ENCODE measurements at regions of chr4 and their contacts with region 1.

Region 1: GRCh38 chr4:168408620-168409019 is 71.7 kb downstream of the DDX60L start:
- DNase-seq: no peak

Region 2: DNA sequence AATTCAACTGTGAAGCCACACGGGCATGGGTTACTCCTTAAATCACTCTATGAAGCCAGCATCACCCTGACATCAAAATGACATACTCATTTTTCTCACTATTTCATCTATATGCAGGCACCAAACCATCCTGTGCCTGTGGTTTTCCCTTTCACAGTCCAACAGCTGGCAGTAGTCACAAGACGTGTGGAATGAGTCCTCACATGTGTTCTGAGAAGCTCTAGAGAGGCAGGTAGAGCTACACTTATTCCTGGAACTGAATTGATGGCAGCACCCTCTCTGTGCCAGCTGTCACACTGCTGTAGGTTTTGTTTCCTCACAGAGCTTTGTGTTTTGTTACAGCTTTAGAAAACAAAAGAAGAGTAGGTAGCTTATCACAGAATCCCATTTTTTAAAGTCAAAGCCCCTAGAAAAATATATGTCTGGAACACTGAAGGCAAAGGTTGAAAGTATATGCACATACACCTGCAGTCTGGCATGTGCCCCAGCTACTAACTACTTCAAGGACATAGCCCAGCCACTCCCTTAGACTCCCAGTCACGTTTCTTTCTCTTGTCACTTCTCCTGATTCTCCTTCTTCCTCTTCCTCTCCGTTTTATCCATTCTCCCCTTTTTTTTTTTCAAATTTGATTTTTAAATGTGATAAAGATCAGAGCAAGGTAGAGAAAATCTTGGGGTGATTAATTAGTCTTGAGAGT is 209.2 kb before region 1 on chr4:
- intact Hi-C with region 1: loop called (anchors 10 kb)
- DNase-seq: no peak

Region 3: GRCh38 chr4:168257768-168258167 is 150.9 kb before region 1 on chr4:
- intact Hi-C with region 1: loop called (anchors 5 kb)
- DNase-seq: no peak

Region 4: GRCh38 chr4:168318266-168318895 is 90.2 kb before region 1 on chr4 and contains the start of gene DDX60:
- intact Hi-C with region 1: loop called (anchors 5 kb)
- DNase-seq: peak; percentile 92
- total RNA-seq, gene DDX60: 10.8 TPM

Region 5: GRCh38 chr4:168388890-168389289 is 19.7 kb before region 1 on chr4:
- intact Hi-C with region 1: no loop called
- DNase-seq: no peak

Region 6: DNA sequence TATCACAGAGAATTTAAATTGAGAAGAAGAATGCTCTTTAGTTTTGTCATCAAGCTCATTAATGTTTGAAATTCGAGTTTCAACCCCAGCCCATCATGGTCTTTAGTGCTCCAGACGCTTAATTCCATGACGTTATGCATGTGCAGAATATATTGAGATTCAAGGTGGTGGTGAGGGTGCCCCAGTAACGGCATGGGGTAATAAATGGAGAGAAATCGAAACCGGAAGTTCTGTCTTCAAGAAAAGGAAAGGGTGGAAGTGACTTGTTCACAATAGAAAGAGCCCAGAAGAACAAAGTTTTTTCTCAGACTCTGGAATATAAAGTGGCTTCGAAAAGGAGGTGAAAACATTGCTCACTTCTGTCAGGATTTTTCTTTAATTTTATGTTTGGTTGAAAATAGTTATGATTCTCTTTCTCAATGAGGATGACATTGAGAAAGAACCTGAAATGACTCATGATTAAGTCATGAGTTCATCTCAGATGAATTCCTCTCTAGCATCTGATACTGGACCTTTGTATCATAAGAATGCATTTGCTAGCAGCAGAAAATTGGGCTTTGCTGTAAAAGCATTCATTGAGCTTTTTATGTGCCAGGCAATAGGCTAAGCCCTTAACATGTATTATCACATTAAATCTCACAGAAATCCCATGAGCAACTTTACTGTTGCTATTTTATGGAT is 72.5 kb after region 1 on chr4:
- intact Hi-C with region 1: loop called (anchors 5 kb)
- DNase-seq: no peak